OCI-LY7 (cell line): ENCODE measurements at regions of chr5 and their contacts with region 1.

Region 1: DNA sequence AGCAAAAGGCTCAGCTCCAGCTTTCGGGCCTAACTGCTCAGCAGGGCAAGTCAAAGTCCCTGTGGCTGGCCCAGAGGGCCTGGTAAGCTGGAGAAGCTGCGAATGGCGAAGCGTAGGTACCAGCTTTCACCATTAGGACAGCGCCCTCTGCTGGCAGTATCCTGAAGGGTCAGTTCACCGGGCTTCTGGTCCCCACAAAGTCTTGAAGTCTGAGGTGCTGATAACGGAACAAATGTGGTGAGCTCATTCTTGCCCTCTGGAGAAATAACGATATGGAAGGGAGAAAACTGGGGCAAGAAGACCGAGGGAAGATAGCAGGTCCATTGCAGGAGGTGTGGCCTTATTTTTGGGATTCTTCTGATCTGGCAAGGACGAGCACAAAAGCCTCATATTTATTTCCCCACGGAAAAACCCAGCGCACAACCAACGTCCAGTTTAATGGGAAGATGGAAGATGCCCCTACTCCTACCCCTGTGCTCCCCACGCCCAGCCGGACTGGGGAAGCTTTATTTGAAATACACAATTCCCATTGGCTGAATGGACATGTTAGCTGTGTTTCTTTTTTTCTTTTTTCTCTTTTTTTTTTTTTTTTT is 7.2 kb downstream of the SOWAHA start:
- DNase-seq: peak; percentile 84
- H3K4me3 ChIP-seq: no peak overlapping the region
- H3K27ac ChIP-seq: no peak overlapping the region
- H3K4me1 ChIP-seq: no peaks in the 10 kb centered on the region
- CTCF ChIP-seq: peak; percentile 95

Region 2: GRCh38 chr5:132662925-132663770 is 157.1 kb before region 1 on chr5:
- CTCF ChIA-PET with region 1: no interaction called
- POLR2A ChIA-PET with region 1: no interaction called
- intact Hi-C with region 1: loop called (anchors 5 kb)
- DNase-seq: peak; percentile 19
- H3K4me3 ChIP-seq: no peak overlapping the region
- H3K27ac ChIP-seq: no peak overlapping the region
- H3K4me1 ChIP-seq: no peaks in the 10 kb centered on the region
- CTCF ChIP-seq: no peak